GM12878 (cell line): ENCODE measurements at regions of chr1 and their contacts with region 1.

Region 1: DNA sequence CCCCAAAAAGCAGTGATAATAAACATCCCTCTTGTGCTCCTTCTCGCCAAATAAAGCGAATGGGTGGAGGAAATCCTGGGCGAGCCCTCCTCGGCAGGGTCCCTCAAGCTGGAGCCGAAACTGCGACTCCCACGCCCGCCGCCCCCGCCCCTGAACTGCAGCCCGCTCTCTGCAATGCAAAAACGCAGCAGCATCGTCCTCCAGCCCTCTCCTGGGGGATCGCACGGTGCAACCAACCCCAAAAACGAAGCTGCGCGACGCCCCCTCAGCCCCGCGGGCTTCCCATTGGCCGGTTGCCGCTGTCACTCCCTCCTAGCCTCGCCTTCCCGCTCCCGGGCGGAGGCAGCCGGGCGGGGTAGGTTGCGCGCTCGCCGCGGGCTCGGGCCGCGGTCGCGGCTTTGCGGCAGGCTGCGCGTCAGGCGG is at the start of gene TMCC2:
- DNase-seq: no peak
- ATAC-seq: peak; percentile 85
- H3K4me3 ChIP-seq: peak within 1 kb of the TSS; percentile 56
- H3K27ac ChIP-seq: no peak within 1 kb of the TSS
- H3K4me1 ChIP-seq: peaks cover 30% of the 10 kb centered on the region
- H3K27me3 ChIP-seq: peaks cover 2 to 15% of the 10 kb centered on the region in 2 experiments; a peak in 3 of 4 replicates
- CTCF ChIP-seq: no peak
- EP300 ChIP-seq: no peak
- POLR2A ChIP-seq: no peak
- RAD21 ChIP-seq: no peak
- polyA plus RNA-seq, gene TMCC2: 0.06 to 0.18 TPM

Region 2: GRCh38 chr1:204307334-204307883 is 920.2 kb before region 1 on chr1:
- CTCF ChIA-PET with region 1: no interaction called
- POLR2A ChIA-PET with region 1: no interaction called
- RAD21 ChIA-PET with region 1: no interaction called
- SMC1A ChIA-PET with region 1: no interaction called
- in situ Hi-C with region 1: no loop called
- intact Hi-C with region 1: no loop called
- DNase-seq: no peak
- ATAC-seq: no peak
- H3K4me3 ChIP-seq: no peak overlapping the region
- H3K27ac ChIP-seq: no peak overlapping the region
- H3K4me1 ChIP-seq: no peaks in the 10 kb centered on the region
- H3K27me3 ChIP-seq: peaks cover 2 to 5% of the 10 kb centered on the region in 2 experiments; a peak in 3 of 4 replicates
- CTCF ChIP-seq: no peak
- EP300 ChIP-seq: no peak
- POLR2A ChIP-seq: no peak
- RAD21 ChIP-seq: no peak

Region 3: DNA sequence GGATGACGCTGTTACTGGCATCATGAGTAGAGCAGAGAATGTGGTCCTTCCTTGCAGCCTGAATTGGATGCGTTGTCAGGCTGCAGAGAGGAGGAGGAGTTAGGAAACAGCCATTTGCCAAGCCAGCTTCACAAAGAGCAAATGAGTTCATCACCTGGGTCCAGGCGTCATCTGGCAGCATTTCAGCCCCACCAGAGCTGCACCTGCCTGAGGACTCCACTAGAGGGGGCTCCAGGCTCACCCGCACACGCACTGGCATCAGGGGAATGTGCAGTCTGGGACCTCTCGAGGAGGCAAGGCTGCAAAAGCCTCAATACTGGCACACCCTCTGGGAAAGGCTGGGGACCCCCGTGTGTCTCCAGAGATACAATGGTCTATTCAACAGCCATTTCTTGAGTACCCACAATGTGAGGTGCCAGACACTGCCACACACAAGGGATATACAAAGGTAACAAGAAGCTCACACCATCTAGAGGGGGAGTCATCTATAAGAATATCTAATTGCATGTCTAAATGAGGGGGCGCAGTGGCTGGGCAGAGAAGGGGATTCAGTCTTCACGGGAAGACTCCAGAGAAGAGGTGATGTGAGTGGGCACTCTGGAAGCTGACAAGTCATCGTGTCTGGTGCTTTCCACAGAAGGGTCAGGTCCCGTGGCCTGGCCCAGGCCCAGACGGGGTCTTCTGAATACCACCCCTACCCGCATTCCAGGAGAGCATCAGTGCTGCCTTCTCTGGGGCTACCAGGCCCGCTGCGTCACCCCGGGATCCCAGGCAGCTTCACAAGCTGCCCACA is 238.1 kb before region 1 on chr1:
- CTCF ChIA-PET with region 1: interaction called, 16 read pairs
- POLR2A ChIA-PET with region 1: no interaction called
- RAD21 ChIA-PET with region 1: interaction called, 4 read pairs
- SMC1A ChIA-PET with region 1: interaction called, 10 read pairs
- in situ Hi-C with region 1: no loop called
- intact Hi-C with region 1: no loop called
- DNase-seq: no peak
- ATAC-seq: peak; percentile 90
- H3K4me3 ChIP-seq: no peak overlapping the region
- H3K27ac ChIP-seq: no peak overlapping the region
- H3K4me1 ChIP-seq: no peaks in the 10 kb centered on the region; the same call in 1 of the 2 replicates
- H3K27me3 ChIP-seq: peaks cover 2 to 4% of the 10 kb centered on the region in 2 experiments; a peak in 1 of 4 replicates
- CTCF ChIP-seq: peak; percentile 94 to 97 (median 95); a peak in 5 of 6 replicates
- EP300 ChIP-seq: no peak
- POLR2A ChIP-seq: no peak
- RAD21 ChIP-seq: peak; percentile 95

Region 4: GRCh38 chr1:205042911-205043806 is 184.4 kb before region 1 on chr1 and contains the start of gene CNTN2:
- CTCF ChIA-PET with region 1: no interaction called
- POLR2A ChIA-PET with region 1: no interaction called
- RAD21 ChIA-PET with region 1: no interaction called
- SMC1A ChIA-PET with region 1: no interaction called
- in situ Hi-C with region 1: no loop called
- intact Hi-C with region 1: no loop called
- DNase-seq: no peak
- ATAC-seq: no peak
- H3K4me3 ChIP-seq: no peak within 1 kb of the TSS
- H3K27ac ChIP-seq: no peak within 1 kb of the TSS
- H3K4me1 ChIP-seq: no peaks in the 10 kb centered on the region
- H3K27me3 ChIP-seq: peaks cover 0 to 15% of the 10 kb centered on the region in 2 experiments
- CTCF ChIP-seq: no peak
- EP300 ChIP-seq: no peak
- POLR2A ChIP-seq: no peak
- RAD21 ChIP-seq: no peak
- polyA plus RNA-seq, gene CNTN2: not detected

Region 5: GRCh38 chr1:205199090-205199930 is 28.3 kb before region 1 on chr1:
- CTCF ChIA-PET with region 1: interaction called, 19 read pairs
- POLR2A ChIA-PET with region 1: no interaction called
- RAD21 ChIA-PET with region 1: interaction called, 5 read pairs
- SMC1A ChIA-PET with region 1: interaction called, 4 read pairs
- in situ Hi-C with region 1: no loop called
- intact Hi-C with region 1: no loop called
- DNase-seq: no peak
- ATAC-seq: peak; percentile 67
- H3K4me3 ChIP-seq: no peak overlapping the region
- H3K27ac ChIP-seq: no peak overlapping the region
- H3K4me1 ChIP-seq: peaks cover 3% of the 10 kb centered on the region; the same call in 1 of the 2 replicates
- H3K27me3 ChIP-seq: no peaks in the 10 kb centered on the region
- CTCF ChIP-seq: peak in 1 of 3 experiments; percentile 13; a peak in 1 of 6 replicates
- EP300 ChIP-seq: no peak
- POLR2A ChIP-seq: no peak
- RAD21 ChIP-seq: peak; percentile 20; the same call in 1 of the 2 replicates

Region 6: GRCh38 chr1:205237526-205238484 is 10.2 kb after region 1 on chr1:
- CTCF ChIA-PET with region 1: interaction called, 836 read pairs
- POLR2A ChIA-PET with region 1: interaction called, 20 read pairs
- RAD21 ChIA-PET with region 1: interaction called, 728 read pairs
- SMC1A ChIA-PET with region 1: interaction called, 154 read pairs
- in situ Hi-C with region 1: no loop called
- intact Hi-C with region 1: no loop called
- DNase-seq: no peak
- ATAC-seq: peak; percentile 70
- H3K4me3 ChIP-seq: no peak overlapping the region
- H3K27ac ChIP-seq: no peak overlapping the region
- H3K4me1 ChIP-seq: peaks cover 18% of the 10 kb centered on the region
- H3K27me3 ChIP-seq: no peaks in the 10 kb centered on the region; a peak in 1 of 4 replicates
- CTCF ChIP-seq: no peak
- EP300 ChIP-seq: no peak; a peak in 1 of 4 replicates
- POLR2A ChIP-seq: no peak
- RAD21 ChIP-seq: no peak

Region 7: DNA sequence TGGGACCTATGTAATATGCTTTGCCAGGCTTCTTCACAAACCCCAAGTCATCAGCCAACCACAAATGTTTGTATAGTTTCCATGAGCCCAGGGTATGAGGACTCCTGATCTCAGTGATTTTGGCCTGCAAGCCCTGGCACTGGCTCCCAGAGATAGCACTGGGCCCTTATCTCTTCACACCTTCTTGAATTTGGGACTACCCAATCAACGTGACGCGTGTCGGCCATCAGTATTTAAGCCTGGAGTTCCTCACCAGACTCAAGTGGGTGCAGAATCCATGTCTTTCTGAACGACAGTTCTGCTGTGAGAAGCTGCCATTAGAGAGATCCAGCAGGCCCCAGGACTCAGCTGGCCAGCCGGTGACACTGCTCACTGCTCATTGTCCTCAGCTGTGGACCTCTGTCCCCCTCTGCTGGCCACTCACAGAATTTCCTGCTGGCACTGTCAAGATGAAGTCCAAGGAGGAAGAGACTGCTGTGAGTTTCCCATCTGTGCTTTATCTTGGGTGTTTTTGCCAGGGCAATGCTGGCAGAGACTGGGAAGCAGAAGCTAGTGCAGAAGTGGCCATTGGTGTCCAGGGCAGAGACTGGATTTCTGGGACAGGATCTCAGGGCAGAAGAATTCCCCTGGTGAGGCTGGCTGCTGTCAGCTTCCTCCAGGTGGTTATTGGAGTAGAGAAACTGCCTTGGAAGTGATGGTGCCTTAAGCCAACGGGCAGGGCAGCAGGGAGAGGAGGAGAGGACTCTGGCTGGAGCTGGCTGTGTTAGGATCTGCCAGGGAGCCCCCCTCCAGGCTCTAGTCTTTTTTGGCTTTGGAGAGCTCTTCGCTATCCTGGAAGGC is 28.6 kb after region 1 on chr1:
- CTCF ChIA-PET with region 1: interaction called, 836 read pairs
- POLR2A ChIA-PET with region 1: interaction called, 75 read pairs
- RAD21 ChIA-PET with region 1: interaction called, 728 read pairs
- SMC1A ChIA-PET with region 1: interaction called, 427 read pairs
- in situ Hi-C with region 1: no loop called
- intact Hi-C with region 1: loop called (anchors 1 kb)
- DNase-seq: no peak
- ATAC-seq: peak; percentile 98
- H3K4me3 ChIP-seq: no peak overlapping the region
- H3K27ac ChIP-seq: no peak overlapping the region
- H3K4me1 ChIP-seq: no peaks in the 10 kb centered on the region
- H3K27me3 ChIP-seq: peaks cover under 1 to 2% of the 10 kb centered on the region in 2 experiments; a peak in 2 of 4 replicates
- CTCF ChIP-seq: peak; percentile 91 to 96 (median 93); a peak in 5 of 6 replicates
- EP300 ChIP-seq: no peak
- POLR2A ChIP-seq: no peak
- RAD21 ChIP-seq: peak; percentile 99

Region 8: DNA sequence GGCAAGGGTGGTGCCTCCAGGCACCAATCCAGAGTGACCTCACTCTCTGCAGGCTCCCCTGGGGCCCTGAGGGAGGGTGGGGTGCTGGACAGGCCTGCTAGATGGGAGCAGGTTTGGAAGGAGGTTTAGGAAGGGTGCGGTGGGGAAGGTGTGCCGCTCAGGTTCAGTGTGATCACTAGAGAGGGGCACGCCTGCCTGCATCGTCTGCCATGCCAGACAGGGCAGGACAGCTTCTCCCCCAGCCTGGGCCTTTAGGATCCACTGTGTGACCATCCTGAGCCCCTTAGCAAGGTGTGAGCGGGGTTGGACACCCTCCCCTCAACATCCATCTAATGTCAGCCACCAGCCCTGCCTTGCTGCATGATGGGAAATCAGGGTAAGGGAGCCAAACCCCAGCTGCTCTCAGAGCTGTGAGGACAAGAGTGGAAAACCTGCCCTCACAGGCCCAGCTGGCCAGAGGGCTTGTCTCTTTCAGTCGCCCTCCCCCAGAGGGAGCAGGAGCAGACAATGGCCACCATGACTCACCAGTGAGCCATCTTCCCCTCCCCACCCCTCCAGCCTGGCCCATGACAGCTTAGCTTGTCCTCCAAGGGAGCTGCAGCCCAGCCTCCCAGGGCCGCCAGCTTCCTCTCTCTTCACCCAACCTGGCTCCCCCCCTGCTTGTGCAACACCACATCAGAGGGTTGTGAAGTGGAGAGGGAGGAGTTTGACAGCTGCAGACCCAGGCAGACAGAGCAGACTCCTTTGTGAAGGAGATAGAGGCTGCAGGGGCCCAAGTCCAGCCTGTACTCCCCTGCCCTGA is 56.9 kb after region 1 on chr1:
- CTCF ChIA-PET with region 1: interaction called, 19 read pairs
- POLR2A ChIA-PET with region 1: interaction called, 3 read pairs
- RAD21 ChIA-PET with region 1: interaction called, 19 read pairs
- SMC1A ChIA-PET with region 1: interaction called, 8 read pairs
- in situ Hi-C with region 1: no loop called
- intact Hi-C with region 1: no loop called
- DNase-seq: no peak
- ATAC-seq: peak; percentile 61
- H3K4me3 ChIP-seq: 0 out of 2 replicates have a peak overlapping the region, but pooled peaks have one; percentile 32
- H3K27ac ChIP-seq: no peak overlapping the region
- H3K4me1 ChIP-seq: peaks cover 64% of the 10 kb centered on the region
- H3K27me3 ChIP-seq: no peaks in the 10 kb centered on the region; a peak in 1 of 4 replicates
- CTCF ChIP-seq: 0 out of 6 replicates have a peak, but pooled peaks of 1 of the 3 experiments have one; percentile 0
- EP300 ChIP-seq: peak; percentile 33 to 42; a peak in 1 of 4 replicates
- POLR2A ChIP-seq: 0 out of 2 replicates have a peak, but pooled peaks have one; percentile 29
- RAD21 ChIP-seq: no peak

Region 9: DNA sequence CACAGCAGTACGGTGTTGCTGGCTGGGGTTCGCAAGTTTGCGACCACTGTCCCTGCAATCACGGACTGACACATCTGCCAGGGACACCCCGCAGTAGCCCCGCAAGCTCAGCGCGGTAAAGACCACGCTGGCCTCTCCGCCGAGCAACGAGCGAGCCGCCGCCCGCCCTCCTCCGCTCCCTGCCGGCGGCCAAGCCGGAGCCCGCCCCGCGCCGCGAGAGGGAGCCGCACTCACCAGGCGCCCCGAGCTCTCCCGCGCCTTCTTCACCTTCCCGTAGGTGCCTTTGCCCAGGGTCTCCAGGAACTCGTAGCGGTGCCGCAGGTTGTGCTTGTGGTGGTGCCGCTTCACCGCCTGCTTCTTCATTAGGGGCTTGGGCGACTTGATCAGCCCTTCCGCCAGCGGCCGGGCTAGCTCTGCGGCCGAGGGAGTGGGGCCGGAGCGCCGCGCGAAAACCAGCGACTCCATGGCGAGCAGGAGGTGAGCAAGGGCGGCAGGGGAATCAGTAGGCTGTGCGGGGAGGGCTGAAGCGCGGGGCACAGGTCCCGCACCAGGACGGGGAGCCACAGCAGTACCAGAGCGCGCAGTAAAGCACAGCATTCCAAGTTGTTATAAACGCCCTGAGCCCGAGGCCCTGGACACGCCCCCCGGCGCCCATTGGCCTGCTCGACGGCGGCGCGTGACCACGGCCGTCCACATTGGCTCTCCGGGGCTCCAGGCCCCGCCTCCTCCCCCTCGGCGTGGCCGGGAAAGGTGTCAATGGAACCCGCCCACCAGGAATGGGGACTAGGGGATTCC is 93.8 kb after region 1 on chr1 and contains the start of gene NUAK2:
- CTCF ChIA-PET with region 1: interaction called, 59 read pairs
- POLR2A ChIA-PET with region 1: interaction called, 6 read pairs
- RAD21 ChIA-PET with region 1: interaction called, 45 read pairs
- SMC1A ChIA-PET with region 1: interaction called, 33 read pairs
- in situ Hi-C with region 1: no loop called
- intact Hi-C with region 1: no loop called
- DNase-seq: no peak
- ATAC-seq: peak; percentile 85
- H3K4me3 ChIP-seq: peak within 1 kb of the TSS; percentile 36; the same call in 1 of the 2 replicates
- H3K27ac ChIP-seq: no peak within 1 kb of the TSS
- H3K4me1 ChIP-seq: peaks cover 13% of the 10 kb centered on the region
- H3K27me3 ChIP-seq: peaks cover 0 to 8% of the 10 kb centered on the region in 2 experiments; a peak in 3 of 4 replicates
- CTCF ChIP-seq: peak in 1 of 3 experiments; percentile 21; a peak in 1 of 6 replicates
- EP300 ChIP-seq: no peak
- POLR2A ChIP-seq: peak; percentile 44; the same call in 1 of the 2 replicates
- RAD21 ChIP-seq: peak; percentile 9; the same call in 1 of the 2 replicates
- polyA plus RNA-seq, gene NUAK2: 0.27 to 0.31 TPM